HepG2 (cell line): ENCODE measurements at regions of chr1 and their contacts with region 1.

Region 1: GRCh38 chr1:59316497-59317128 is 19.7 kb downstream of the FGGY start:
- DNase-seq: no peak
- ATAC-seq: peak; percentile 48
- H3K4me3 ChIP-seq: peak overlapping the region in 2 of 3 experiments; percentile 6 to 9; a peak in 1 of 6 replicates
- H3K27ac ChIP-seq: peak overlapping the region; percentile 58
- H3K4me1 ChIP-seq: peaks cover 40% of the 10 kb centered on the region
- H3K27me3 ChIP-seq: no peaks in the 10 kb centered on the region
- CTCF ChIP-seq: no peak
- EP300 ChIP-seq: no peak
- POLR2A ChIP-seq: no peak
- RAD21 ChIP-seq: no peak

Region 2: GRCh38 chr1:59340411-59341307 is 24.0 kb after region 1 on chr1:
- CTCF ChIA-PET with region 1: no interaction called
- POLR2A ChIA-PET with region 1: no interaction called
- in situ Hi-C with region 1: no loop called
- intact Hi-C with region 1: no loop called
- DNase-seq: no peak
- ATAC-seq: no peak
- H3K4me3 ChIP-seq: no peak overlapping the region
- H3K27ac ChIP-seq: no peak overlapping the region
- H3K4me1 ChIP-seq: peaks cover 12% of the 10 kb centered on the region
- H3K27me3 ChIP-seq: no peaks in the 10 kb centered on the region
- CTCF ChIP-seq: no peak
- EP300 ChIP-seq: no peak
- POLR2A ChIP-seq: no peak
- RAD21 ChIP-seq: no peak

Region 3: GRCh38 chr1:59367301-59368007 is 50.8 kb after region 1 on chr1:
- CTCF ChIA-PET with region 1: no interaction called
- POLR2A ChIA-PET with region 1: no interaction called
- in situ Hi-C with region 1: loop called (anchors 5 kb)
- intact Hi-C with region 1: no loop called
- DNase-seq: no peak
- ATAC-seq: peak; percentile 99
- H3K4me3 ChIP-seq: no peak overlapping the region
- H3K27ac ChIP-seq: peak overlapping the region; percentile 50
- H3K4me1 ChIP-seq: peaks cover 22% of the 10 kb centered on the region
- H3K27me3 ChIP-seq: no peaks in the 10 kb centered on the region
- CTCF ChIP-seq: no peak
- EP300 ChIP-seq: no peak
- POLR2A ChIP-seq: no peak
- RAD21 ChIP-seq: no peak

Region 4: DNA sequence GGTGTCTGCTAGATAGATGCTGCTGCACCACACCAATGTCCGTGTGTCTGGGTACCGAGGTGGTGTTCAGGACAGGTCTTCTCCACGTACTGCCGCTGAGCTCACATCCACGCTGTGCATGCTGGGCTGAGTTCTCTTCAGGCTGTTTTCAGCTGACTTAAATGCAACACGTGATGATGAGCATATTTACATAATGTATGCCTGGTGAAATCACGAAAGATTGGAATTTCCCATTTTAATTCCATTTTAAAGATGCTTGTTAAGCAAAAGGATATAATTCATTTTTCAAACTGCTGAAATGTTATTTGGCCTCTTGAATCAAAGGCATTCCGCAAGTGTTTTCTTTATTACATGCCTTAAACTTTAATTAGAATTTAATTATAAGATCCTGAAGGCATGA is 88.2 kb after region 1 on chr1:
- CTCF ChIA-PET with region 1: no interaction called
- POLR2A ChIA-PET with region 1: no interaction called
- in situ Hi-C with region 1: no loop called
- intact Hi-C with region 1: no loop called
- DNase-seq: no peak
- ATAC-seq: no peak
- H3K4me3 ChIP-seq: no peak overlapping the region
- H3K27ac ChIP-seq: no peak overlapping the region
- H3K4me1 ChIP-seq: peaks cover 32% of the 10 kb centered on the region
- H3K27me3 ChIP-seq: no peaks in the 10 kb centered on the region
- CTCF ChIP-seq: no peak
- EP300 ChIP-seq: no peak
- POLR2A ChIP-seq: no peak
- RAD21 ChIP-seq: no peak